ENCODE measurements at regions of chr14 and their contacts with region 1.

Region 1: GRCh38 chr14:68104518-68104917 is 284.9 kb downstream of the RAD51B start:
- DNase-seq: no peak
- H3K4me3 ChIP-seq: no peak overlapping the region
- H3K27ac ChIP-seq: peak overlapping the region; percentile 61 to 88 (median 78)
- H3K4me1 ChIP-seq: peaks cover 0 to 76% (median 68%) of the 10 kb centered on the region in 4 donors
- H3K27me3 ChIP-seq: no peaks in the 10 kb centered on the region
- CTCF ChIP-seq: no peak
- EP300 ChIP-seq: no peak
- POLR2A ChIP-seq: no peak

Region 2: GRCh38 chr14:68039593-68039992 is 64.9 kb before region 1 on chr14:
- intact Hi-C with region 1: loop called (anchors 5 kb)
- DNase-seq: no peak
- H3K4me3 ChIP-seq: no peak overlapping the region
- H3K27ac ChIP-seq: peak overlapping the region; percentile 22 to 90 (median 85)
- H3K4me1 ChIP-seq: peaks cover 0 to 92% (median 61%) of the 10 kb centered on the region in 4 donors
- H3K27me3 ChIP-seq: no peaks in the 10 kb centered on the region
- CTCF ChIP-seq: no peak
- EP300 ChIP-seq: no peak
- POLR2A ChIP-seq: no peak

Region 3: GRCh38 chr14:68172627-68173026 is 68.1 kb after region 1 on chr14:
- intact Hi-C with region 1: no loop called
- DNase-seq: no peak
- H3K4me3 ChIP-seq: no peak overlapping the region
- H3K27ac ChIP-seq: peak overlapping the region; percentile 59 to 84 (median 74)
- H3K4me1 ChIP-seq: peaks cover 0 to 96% (median 69%) of the 10 kb centered on the region in 4 donors
- H3K27me3 ChIP-seq: no peaks in the 10 kb centered on the region
- CTCF ChIP-seq: no peak
- EP300 ChIP-seq: no peak
- POLR2A ChIP-seq: no peak

Region 4: GRCh38 chr14:68232300-68233055 is 128.0 kb after region 1 on chr14:
- intact Hi-C with region 1: loop called (anchors 5 kb)
- DNase-seq: peak; percentile 85
- H3K4me3 ChIP-seq: no peak overlapping the region
- H3K27ac ChIP-seq: peak overlapping the region; percentile 79 to 88 (median 82)
- H3K4me1 ChIP-seq: peaks cover 0 to 52% (median 49%) of the 10 kb centered on the region in 4 donors
- H3K27me3 ChIP-seq: no peaks in the 10 kb centered on the region
- CTCF ChIP-seq: no peak
- EP300 ChIP-seq: peak in 1 of 4 donors; percentile 52
- POLR2A ChIP-seq: no peak

Region 5: DNA sequence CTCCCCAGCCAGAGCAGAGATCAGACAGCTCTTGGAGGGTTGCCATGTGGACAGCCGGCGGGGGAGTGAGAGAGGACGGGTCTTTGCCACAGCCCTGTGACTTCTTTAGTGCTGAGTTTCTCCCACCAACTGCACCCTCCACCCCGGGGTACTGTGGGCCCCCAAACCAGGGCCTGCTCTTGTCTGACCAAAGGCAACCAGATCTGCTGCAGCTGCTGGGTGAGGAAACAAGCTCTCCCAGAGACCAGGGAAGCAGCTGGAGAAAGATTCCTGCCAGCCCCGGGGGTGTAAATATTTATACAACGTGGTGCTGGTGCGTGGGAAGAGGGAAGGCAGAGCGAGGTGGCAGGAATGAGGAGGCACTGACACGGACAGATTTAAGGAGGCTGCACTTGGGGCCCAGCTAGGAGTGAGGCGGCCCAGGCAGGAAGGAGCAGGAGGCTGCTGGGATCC is 702.7 kb after region 1 on chr14:
- intact Hi-C with region 1: loop called (anchors 5 kb)
- DNase-seq: peak; percentile 92
- H3K4me3 ChIP-seq: no peak overlapping the region
- H3K27ac ChIP-seq: peak overlapping the region; percentile 84 to 91 (median 86)
- H3K4me1 ChIP-seq: peaks cover 0 to 56% (median 51%) of the 10 kb centered on the region in 4 donors
- H3K27me3 ChIP-seq: no peaks in the 10 kb centered on the region
- CTCF ChIP-seq: no peak
- EP300 ChIP-seq: peak in 1 of 4 donors; percentile 66
- POLR2A ChIP-seq: no peak